CD8-positive, alpha-beta T cell (primary cell): ENCODE measurements at regions of chr1 and their contacts with region 1.

Region 1: GRCh38 chr1:2545759-2546514 is 10.2 kb upstream of the TNFRSF14 start:
- DNase-seq: peak; percentile 85 to 96 (median 89)
- ATAC-seq: peak; percentile 42
- H3K4me3 ChIP-seq: peak overlapping the region; percentile 87 to 91
- H3K4me3 Mint-ChIP-seq: peak overlapping the region; percentile 91
- H3K27ac ChIP-seq: peak overlapping the region; percentile 79 to 99
- H3K27ac Mint-ChIP-seq: peak overlapping the region; percentile 96
- H3K4me1 ChIP-seq: peaks cover 40% of the 10 kb centered on the region
- H3K4me1 Mint-ChIP-seq: peaks cover 31% of the 10 kb centered on the region
- H3K27me3 ChIP-seq: no peaks in the 10 kb centered on the region
- H3K27me3 Mint-ChIP-seq: no peaks in the 10 kb centered on the region
- CTCF ChIP-seq: no peak

Region 2: DNA sequence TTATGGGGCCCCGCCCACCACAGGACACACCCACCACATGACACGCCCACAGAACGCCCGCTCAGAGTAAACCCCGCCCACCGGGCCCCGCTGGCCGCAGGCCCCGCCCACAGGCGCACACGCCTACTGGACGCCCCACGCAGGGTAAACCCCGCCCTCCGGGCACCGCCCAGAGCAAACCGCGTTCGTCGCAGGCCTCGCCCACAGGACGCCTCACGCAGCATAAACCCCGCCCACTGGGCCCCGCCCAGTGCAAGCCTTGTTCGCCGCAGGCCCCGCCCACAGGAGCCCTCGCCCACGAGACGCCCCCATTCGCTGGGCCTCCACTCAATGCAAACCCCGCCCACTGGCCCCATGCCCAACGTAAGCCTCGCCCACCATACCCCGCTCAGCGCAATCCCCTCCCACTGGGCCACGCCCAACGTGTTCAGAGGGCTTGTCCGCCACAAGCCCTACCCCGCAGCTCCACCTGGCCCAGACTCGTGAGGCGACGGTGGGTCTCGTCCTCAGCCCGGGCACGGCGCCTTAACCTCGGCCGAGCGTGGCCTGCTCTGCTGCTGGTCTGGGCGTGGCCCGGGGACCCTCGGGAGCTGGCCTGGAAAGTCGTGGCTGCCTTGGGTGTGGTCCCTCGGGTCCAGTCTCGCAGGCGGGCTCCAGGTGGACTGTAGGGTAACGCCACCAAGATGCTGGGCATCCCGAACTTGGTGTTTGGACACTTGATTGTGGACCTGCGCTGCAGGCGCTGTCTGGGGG is 626.5 kb before region 1 on chr1:
- CTCF ChIA-PET with region 1: no interaction called
- POLR2A ChIA-PET with region 1: no interaction called
- intact Hi-C with region 1: loop called in 1 of 2 experiments (anchors 2 kb)
- DNase-seq: peak; percentile 97 to 100 (median 99)
- ATAC-seq: peak; percentile 89
- H3K4me3 ChIP-seq: peak overlapping the region; percentile 39 to 74
- H3K4me3 Mint-ChIP-seq: peak overlapping the region; percentile 47
- H3K27ac ChIP-seq: peak overlapping the region in 1 of 2 experiments; percentile 28
- H3K27ac Mint-ChIP-seq: peak overlapping the region; percentile 5
- H3K4me1 ChIP-seq: peaks cover 17% of the 10 kb centered on the region
- H3K4me1 Mint-ChIP-seq: peaks cover 3% of the 10 kb centered on the region
- H3K27me3 ChIP-seq: no peaks in the 10 kb centered on the region
- H3K27me3 Mint-ChIP-seq: no peaks in the 10 kb centered on the region
- CTCF ChIP-seq: no peak

Region 3: GRCh38 chr1:2233997-2234761 is 311.8 kb before region 1 on chr1:
- CTCF ChIA-PET with region 1: no interaction called
- POLR2A ChIA-PET with region 1: interaction called, 3 read pairs
- intact Hi-C with region 1: loop called in 1 of 2 experiments (anchors 10 kb)
- DNase-seq: peak; percentile 62 to 94 (median 83)
- ATAC-seq: peak; percentile 55
- H3K4me3 ChIP-seq: peak overlapping the region; percentile 25 to 82
- H3K4me3 Mint-ChIP-seq: peak overlapping the region; percentile 98
- H3K27ac ChIP-seq: peak overlapping the region; percentile 54 to 80
- H3K27ac Mint-ChIP-seq: peak overlapping the region; percentile 98
- H3K4me1 ChIP-seq: peaks cover 83% of the 10 kb centered on the region
- H3K4me1 Mint-ChIP-seq: peaks cover 71% of the 10 kb centered on the region
- H3K27me3 ChIP-seq: no peaks in the 10 kb centered on the region
- H3K27me3 Mint-ChIP-seq: no peaks in the 10 kb centered on the region
- CTCF ChIP-seq: no peak

Region 4: DNA sequence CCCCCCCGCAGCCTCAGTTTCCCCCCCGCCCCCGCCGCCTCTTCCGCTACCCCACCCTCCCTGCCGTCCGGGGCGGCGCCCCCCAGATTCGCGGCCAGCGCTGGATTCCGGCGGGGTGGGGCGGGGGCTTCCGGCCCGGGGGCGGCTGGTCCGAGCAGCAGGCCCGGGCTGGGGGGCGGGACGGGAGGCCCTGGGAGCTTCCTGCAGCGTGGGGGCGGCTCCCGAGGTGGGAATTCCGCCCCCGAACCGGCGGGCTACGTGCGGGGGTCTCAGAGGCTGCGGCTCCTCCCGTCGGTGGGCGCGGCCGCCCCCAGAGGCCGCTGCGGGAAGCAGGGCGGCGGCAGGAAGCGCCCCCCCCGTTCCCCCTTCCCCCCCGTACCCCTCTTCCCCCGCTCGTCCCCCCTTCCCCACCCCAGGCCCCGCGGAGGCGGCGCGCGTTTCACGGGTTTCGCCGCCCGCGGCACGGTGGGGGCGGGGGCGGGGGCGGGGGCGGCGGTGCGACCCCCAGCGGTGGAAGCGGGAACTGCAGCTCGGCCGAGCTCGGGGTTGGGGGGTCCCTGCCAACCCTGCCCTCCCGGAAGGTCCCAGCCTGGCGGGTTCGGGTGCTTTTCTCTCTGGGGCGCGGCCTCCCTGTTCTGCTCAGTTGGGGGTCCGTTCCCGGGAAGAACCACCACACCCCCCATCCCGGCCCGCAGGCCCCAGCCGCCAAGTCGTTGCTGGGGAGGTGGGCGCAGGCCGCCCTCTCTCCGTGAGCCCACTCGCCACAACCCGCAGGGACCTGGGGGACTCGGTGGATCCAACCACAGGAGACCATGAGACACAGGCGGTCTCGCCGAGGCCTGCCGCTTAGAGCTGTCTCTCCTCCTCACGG is 230.9 kb before region 1 on chr1:
- CTCF ChIA-PET with region 1: no interaction called
- POLR2A ChIA-PET with region 1: interaction called, 3 read pairs
- intact Hi-C with region 1: loop called in 1 of 2 experiments (anchors 10 kb)
- DNase-seq: peak; percentile 52 to 89 (median 73)
- ATAC-seq: peak; percentile 50
- H3K4me3 ChIP-seq: peak overlapping the region; percentile 52 to 58
- H3K4me3 Mint-ChIP-seq: peak overlapping the region; percentile 64
- H3K27ac ChIP-seq: peak overlapping the region; percentile 70 to 82
- H3K27ac Mint-ChIP-seq: peak overlapping the region; percentile 79
- H3K4me1 ChIP-seq: peaks cover 76% of the 10 kb centered on the region
- H3K4me1 Mint-ChIP-seq: peaks cover 33% of the 10 kb centered on the region
- H3K27me3 ChIP-seq: no peaks in the 10 kb centered on the region
- H3K27me3 Mint-ChIP-seq: no peaks in the 10 kb centered on the region
- CTCF ChIP-seq: peak; percentile 97

Region 5: DNA sequence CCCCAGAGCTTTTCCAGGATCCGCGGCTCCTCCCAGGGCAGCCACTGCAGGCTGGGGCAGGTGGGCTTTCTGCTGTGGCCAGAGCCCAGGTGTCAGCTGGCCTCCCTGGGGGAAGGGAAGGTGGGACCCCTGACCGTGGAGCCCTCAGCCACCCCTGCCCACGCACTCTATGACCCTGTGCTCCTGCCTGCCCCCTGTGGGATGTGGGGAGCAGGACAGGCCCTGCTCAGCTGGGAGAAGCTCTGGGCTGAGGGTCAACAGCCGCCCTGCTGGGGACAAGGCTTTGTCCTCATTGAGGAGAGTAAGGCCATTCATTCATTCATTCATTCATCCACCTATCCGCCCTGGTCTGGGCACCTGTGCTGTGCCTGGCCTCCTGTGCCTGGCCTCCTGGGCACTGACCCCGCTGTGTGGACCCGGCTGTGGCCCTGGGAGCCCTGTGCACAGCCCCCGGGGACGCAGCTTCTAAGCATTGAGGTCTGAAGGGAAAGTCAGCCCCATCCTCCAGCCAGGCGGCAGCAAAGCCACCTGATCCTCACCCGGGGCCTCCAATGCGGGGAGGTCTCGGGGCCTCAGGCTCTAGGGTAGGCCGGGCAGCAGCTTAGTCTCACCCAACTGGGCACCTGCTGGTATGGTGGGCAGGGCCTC is 16.1 kb after region 1 on chr1:
- CTCF ChIA-PET with region 1: interaction called, 17 read pairs
- POLR2A ChIA-PET with region 1: interaction called, 4 read pairs
- intact Hi-C with region 1: no loop called
- DNase-seq: peak in 3 of 9 experiments; percentile 22 to 53 (median 40)
- ATAC-seq: peak; percentile 67
- H3K4me3 ChIP-seq: no peak overlapping the region
- H3K4me3 Mint-ChIP-seq: no peak overlapping the region
- H3K27ac ChIP-seq: no peak overlapping the region
- H3K27ac Mint-ChIP-seq: peak overlapping the region; percentile 45
- H3K4me1 ChIP-seq: peaks cover 21% of the 10 kb centered on the region
- H3K4me1 Mint-ChIP-seq: peaks cover 23% of the 10 kb centered on the region
- H3K27me3 ChIP-seq: no peaks in the 10 kb centered on the region
- H3K27me3 Mint-ChIP-seq: no peaks in the 10 kb centered on the region
- CTCF ChIP-seq: peak; percentile 38

Region 6: GRCh38 chr1:2586154-2587070 is 40.5 kb after region 1 on chr1 and contains the start of gene PRXL2B:
- CTCF ChIA-PET with region 1: interaction called, 21 read pairs
- POLR2A ChIA-PET with region 1: interaction called, 61 read pairs
- intact Hi-C with region 1: loop called (anchors 1 kb)
- DNase-seq: peak; percentile 94 to 99 (median 97)
- ATAC-seq: peak; percentile 69
- H3K4me3 ChIP-seq: peak within 1 kb of the TSS; percentile 79 to 95
- H3K4me3 Mint-ChIP-seq: peak within 1 kb of the TSS; percentile 93
- H3K27ac ChIP-seq: peak within 1 kb of the TSS; percentile 95 to 98
- H3K27ac Mint-ChIP-seq: peak within 1 kb of the TSS; percentile 99
- H3K4me1 ChIP-seq: peaks cover 37% of the 10 kb centered on the region
- H3K4me1 Mint-ChIP-seq: peaks cover 40% of the 10 kb centered on the region
- H3K27me3 ChIP-seq: no peaks in the 10 kb centered on the region
- H3K27me3 Mint-ChIP-seq: no peaks in the 10 kb centered on the region
- CTCF ChIP-seq: no peak
- total RNA-seq, gene PRXL2B: 13.5 to 15.9 TPM